IMR-90 (cell line): ENCODE measurements at regions of chr3 and their contacts with region 1.

Region 1: GRCh38 chr3:148075763-148076716 is 621.7 kb upstream of the AGTR1 start:
- DNase-seq: peak; percentile 59
- ATAC-seq: peak; percentile 87
- H3K4me3 ChIP-seq: no peak overlapping the region
- H3K27ac ChIP-seq: no peak overlapping the region
- H3K4me1 ChIP-seq: no peaks in the 10 kb centered on the region
- H3K27me3 ChIP-seq: no peaks in the 10 kb centered on the region
- CTCF ChIP-seq: peak; percentile 69
- POLR2A ChIP-seq: no peak
- RAD21 ChIP-seq: peak; percentile 76

Region 2: GRCh38 chr3:146640955-146641867 is 1434.8 kb before region 1 on chr3:
- CTCF ChIA-PET with region 1: no interaction called
- POLR2A ChIA-PET with region 1: no interaction called
- dilution Hi-C with region 1: no loop called
- in situ Hi-C with region 1: no loop called
- intact Hi-C with region 1: loop called (anchors 10 kb)
- DNase-seq: peak; percentile 37
- ATAC-seq: peak; percentile 86
- H3K4me3 ChIP-seq: no peak overlapping the region
- H3K27ac ChIP-seq: no peak overlapping the region
- H3K4me1 ChIP-seq: no peaks in the 10 kb centered on the region
- H3K27me3 ChIP-seq: no peaks in the 10 kb centered on the region
- CTCF ChIP-seq: peak; percentile 58
- POLR2A ChIP-seq: no peak
- RAD21 ChIP-seq: peak; percentile 65

Region 3: GRCh38 chr3:147616998-147617619 is 458.9 kb before region 1 on chr3:
- CTCF ChIA-PET with region 1: no interaction called
- POLR2A ChIA-PET with region 1: no interaction called
- dilution Hi-C with region 1: no loop called
- in situ Hi-C with region 1: no loop called
- intact Hi-C with region 1: loop called (anchors 5 kb)
- DNase-seq: peak; percentile 12
- ATAC-seq: no peak
- H3K4me3 ChIP-seq: no peak overlapping the region
- H3K27ac ChIP-seq: no peak overlapping the region
- H3K4me1 ChIP-seq: no peaks in the 10 kb centered on the region
- H3K27me3 ChIP-seq: no peaks in the 10 kb centered on the region
- CTCF ChIP-seq: peak; percentile 52
- POLR2A ChIP-seq: no peak
- RAD21 ChIP-seq: peak; percentile 37

Region 4: DNA sequence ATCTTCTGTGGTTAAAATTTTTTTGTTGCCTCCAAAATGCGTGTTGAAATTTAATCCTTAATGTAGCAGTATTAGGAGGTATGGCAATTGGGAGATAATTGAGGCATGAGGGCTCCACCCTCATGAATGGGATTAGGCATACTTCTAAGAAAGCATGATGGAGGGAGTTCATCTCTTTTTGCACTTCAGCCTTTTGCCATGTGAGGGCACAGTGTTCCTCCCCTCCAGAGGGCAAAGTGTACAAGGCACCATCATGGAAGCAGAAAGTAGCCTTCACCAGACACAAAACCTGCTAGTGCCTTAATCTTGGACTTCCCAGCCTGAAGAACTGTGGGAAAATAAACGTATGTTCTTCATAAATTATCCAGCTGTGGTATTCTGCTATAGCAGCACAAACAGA is 237.4 kb before region 1 on chr3:
- CTCF ChIA-PET with region 1: interaction called, 10 read pairs
- POLR2A ChIA-PET with region 1: no interaction called
- dilution Hi-C with region 1: no loop called
- in situ Hi-C with region 1: no loop called
- intact Hi-C with region 1: loop called (anchors 1 kb)
- DNase-seq: peak; percentile 24
- ATAC-seq: peak; percentile 32; the same call in 1 of the 2 replicates
- H3K4me3 ChIP-seq: no peak overlapping the region
- H3K27ac ChIP-seq: no peak overlapping the region
- H3K4me1 ChIP-seq: no peaks in the 10 kb centered on the region
- H3K27me3 ChIP-seq: no peaks in the 10 kb centered on the region
- CTCF ChIP-seq: peak; percentile 37
- POLR2A ChIP-seq: no peak
- RAD21 ChIP-seq: peak; percentile 45

Region 5: GRCh38 chr3:148021400-148021799 is 54.6 kb before region 1 on chr3:
- CTCF ChIA-PET with region 1: no interaction called
- POLR2A ChIA-PET with region 1: no interaction called
- dilution Hi-C with region 1: no loop called
- in situ Hi-C with region 1: no loop called
- intact Hi-C with region 1: no loop called
- DNase-seq: no peak
- ATAC-seq: no peak
- H3K4me3 ChIP-seq: no peak overlapping the region
- H3K27ac ChIP-seq: no peak overlapping the region
- H3K4me1 ChIP-seq: no peaks in the 10 kb centered on the region
- H3K27me3 ChIP-seq: no peaks in the 10 kb centered on the region
- CTCF ChIP-seq: no peak
- POLR2A ChIP-seq: no peak
- RAD21 ChIP-seq: no peak

Region 6: GRCh38 chr3:148366743-148367410 is 290.8 kb after region 1 on chr3:
- CTCF ChIA-PET with region 1: no interaction called
- POLR2A ChIA-PET with region 1: no interaction called
- dilution Hi-C with region 1: no loop called
- in situ Hi-C with region 1: no loop called
- intact Hi-C with region 1: loop called (anchors 10 kb)
- DNase-seq: peak; percentile 9
- ATAC-seq: peak; percentile 56
- H3K4me3 ChIP-seq: no peak overlapping the region
- H3K27ac ChIP-seq: no peak overlapping the region
- H3K4me1 ChIP-seq: no peaks in the 10 kb centered on the region
- H3K27me3 ChIP-seq: no peaks in the 10 kb centered on the region
- CTCF ChIP-seq: peak; percentile 44
- POLR2A ChIP-seq: no peak
- RAD21 ChIP-seq: peak; percentile 48